ENCODE measurements at regions of chr5 and their contacts with region 1.

Region 1: DNA sequence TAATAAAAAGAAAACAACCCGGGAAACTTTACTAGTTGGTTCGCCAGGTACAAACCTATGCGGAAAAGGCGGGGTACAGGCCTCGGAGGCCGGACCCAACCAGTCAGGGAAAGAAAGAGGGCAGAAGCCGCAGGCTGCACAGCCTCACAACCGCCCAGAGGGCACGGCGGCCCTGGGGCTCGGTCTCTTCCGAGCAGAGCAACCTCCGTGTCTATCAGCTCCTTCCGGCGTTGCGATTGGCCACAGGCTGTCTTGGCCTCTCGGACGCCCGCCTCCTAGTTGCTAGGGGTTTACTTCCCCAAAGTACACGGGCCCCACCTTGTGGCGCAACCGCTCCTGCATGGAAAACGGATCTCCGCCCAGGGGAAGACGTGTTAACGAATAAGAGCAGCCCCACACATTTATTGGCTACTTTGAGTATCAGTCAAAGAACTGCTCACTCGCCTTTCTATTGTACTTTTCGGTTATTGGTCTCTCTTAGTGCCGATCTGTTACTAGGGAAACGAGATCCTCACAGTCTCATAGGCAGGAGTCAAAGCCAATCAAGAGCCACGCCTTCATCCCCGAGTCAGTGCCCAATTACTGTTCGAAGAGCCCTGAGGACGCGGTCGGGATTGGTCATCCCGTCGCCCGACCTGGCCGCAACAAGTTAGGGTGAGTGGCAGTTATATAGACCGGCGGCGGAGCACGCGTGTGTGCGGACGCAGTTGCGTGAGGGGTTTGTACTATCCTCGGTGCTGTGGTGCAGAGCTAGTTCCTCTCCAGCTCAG is at the start of gene G3BP1:
- DNase-seq: peak; percentile 100
- H3K4me3 Mint-ChIP-seq: peak within 1 kb of the TSS; percentile 85
- H3K27ac Mint-ChIP-seq: peak within 1 kb of the TSS; percentile 75
- H3K4me1 Mint-ChIP-seq: peaks cover 33% of the 10 kb centered on the region
- H3K27me3 Mint-ChIP-seq: no peaks in the 10 kb centered on the region
- total RNA-seq, gene G3BP1: 237 TPM

Region 2: GRCh38 chr5:151080623-151081430 is 690.6 kb before region 1 on chr5 and contains the start of gene TNIP1:
- CTCF ChIA-PET with region 1: no interaction called
- POLR2A ChIA-PET with region 1: no interaction called
- intact Hi-C with region 1: loop called (anchors 10 kb)
- DNase-seq: peak; percentile 96
- H3K4me3 Mint-ChIP-seq: peak within 1 kb of the TSS; percentile 89
- H3K27ac Mint-ChIP-seq: peak within 1 kb of the TSS; percentile 94
- H3K4me1 Mint-ChIP-seq: peaks cover 69% of the 10 kb centered on the region
- H3K27me3 Mint-ChIP-seq: no peaks in the 10 kb centered on the region
- total RNA-seq, gene TNIP1: 388 to 401 TPM

Region 3: DNA sequence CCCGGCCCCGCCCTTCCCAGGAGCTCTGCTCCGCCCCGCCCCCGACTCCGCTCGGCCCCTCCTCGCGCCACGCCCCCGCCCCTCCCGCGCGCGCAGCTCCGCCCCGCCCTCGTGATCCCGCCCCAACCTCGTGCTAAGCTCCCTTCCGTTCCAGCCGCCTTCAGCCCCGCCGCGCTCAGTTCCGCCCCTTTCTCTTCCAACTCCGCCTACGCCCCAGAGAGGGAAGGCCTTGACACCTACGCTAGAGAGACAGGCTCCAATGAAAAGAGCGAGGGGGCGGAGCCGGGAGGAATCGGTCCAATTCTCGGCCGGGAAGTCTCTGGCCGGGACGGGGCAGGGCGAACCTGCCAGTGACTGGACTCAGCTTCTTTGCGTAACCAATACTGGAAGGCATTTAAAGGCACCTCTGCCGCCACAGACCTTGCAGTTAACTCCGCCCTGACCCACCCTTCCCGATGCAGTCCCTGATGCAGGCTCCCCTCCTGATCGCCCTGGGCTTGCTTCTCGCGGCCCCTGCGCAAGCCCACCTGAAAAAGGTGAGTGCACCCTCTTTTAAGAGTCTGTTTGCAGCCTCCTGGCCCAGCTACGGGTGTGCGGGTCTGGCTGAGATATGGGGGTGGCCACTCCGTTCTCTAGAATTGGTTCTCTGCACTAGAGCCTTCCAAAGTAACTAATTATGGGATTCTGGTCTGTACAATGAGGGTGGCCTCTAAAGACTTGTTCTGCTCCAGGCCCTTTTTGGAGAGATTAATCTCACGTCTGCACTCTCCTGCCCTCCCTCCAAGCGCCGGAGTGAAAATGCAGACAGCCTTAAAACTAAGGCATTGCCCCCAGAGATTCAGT is 518.5 kb before region 1 on chr5 and contains the start of gene GM2A:
- CTCF ChIA-PET with region 1: no interaction called
- POLR2A ChIA-PET with region 1: interaction called, 6 read pairs
- intact Hi-C with region 1: loop called (anchors 1 kb)
- DNase-seq: peak; percentile 99
- H3K4me3 Mint-ChIP-seq: peak within 1 kb of the TSS; percentile 84
- H3K27ac Mint-ChIP-seq: peak within 1 kb of the TSS; percentile 94
- H3K4me1 Mint-ChIP-seq: peaks cover 45% of the 10 kb centered on the region
- H3K27me3 Mint-ChIP-seq: no peaks in the 10 kb centered on the region
- total RNA-seq, gene GM2A: 28.7 to 29.1 TPM

Region 4: DNA sequence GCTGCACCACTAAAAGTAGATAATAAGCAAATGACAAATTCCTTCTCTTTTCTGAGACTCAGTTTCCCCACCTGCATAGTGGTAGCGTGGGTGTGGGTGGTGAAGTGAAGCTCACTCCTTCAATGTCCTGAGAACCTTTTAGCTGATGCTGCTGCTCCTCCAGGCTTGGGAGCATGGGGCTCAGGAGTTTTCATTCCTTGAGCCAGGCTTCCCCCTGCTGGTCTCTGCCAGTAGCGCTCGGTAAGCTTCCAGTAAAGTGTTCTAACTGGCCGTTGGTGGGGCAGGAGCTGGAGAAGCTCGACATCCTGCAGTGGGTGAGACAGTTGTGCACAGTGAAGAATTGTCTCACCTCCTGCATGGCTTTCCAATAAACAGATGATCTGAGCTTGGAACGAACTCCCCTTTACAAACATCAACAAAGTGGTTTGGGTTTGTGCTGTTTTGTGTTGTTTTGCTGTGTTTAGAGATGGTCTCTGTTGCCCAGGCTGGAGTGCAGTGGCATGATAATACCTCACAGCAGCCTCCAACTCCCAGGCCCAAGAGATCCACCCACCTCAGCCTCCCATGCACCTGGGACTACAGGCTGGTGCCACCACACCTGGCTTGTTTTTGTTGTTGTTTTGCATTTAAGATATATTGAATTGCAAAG is 119.3 kb before region 1 on chr5:
- CTCF ChIA-PET with region 1: interaction called, 39 read pairs
- POLR2A ChIA-PET with region 1: no interaction called
- intact Hi-C with region 1: no loop called
- DNase-seq: peak; percentile 86
- H3K4me3 Mint-ChIP-seq: no peak overlapping the region
- H3K27ac Mint-ChIP-seq: no peak overlapping the region
- H3K4me1 Mint-ChIP-seq: peaks cover 5% of the 10 kb centered on the region
- H3K27me3 Mint-ChIP-seq: no peaks in the 10 kb centered on the region

Region 5: DNA sequence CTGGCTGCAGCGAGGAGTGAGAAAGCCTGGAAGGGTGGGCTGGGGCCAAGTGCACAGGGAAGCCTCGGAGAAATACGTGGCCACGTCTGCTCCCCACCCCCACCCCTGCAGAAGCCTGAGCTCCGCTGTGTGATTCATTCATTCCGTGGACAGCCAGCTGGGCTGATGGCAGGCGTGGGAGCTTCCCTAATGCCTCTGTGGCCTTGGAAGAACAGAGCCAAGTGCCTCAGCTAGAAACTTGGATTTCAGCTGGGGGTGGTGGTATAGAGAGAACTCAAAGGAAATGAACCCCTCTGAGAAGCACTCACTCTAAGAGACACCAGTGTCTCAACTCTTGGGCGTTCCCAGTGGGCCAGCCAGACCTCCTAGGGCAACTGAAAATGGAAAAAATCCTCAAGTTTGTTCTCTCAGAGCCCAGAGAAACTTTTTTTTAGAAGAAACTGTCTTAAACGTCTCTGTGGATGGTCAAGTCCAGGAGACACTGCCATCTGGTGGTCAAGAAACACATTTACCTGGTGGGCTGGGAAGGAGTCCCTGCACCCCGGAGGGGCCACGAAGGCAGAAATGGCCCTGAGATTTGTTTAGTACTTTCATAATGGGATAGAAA is 31.0 kb before region 1 on chr5:
- CTCF ChIA-PET with region 1: interaction called, 23 read pairs
- POLR2A ChIA-PET with region 1: no interaction called
- intact Hi-C with region 1: loop called (anchors 1 kb)
- DNase-seq: peak; percentile 55
- H3K4me3 Mint-ChIP-seq: no peak overlapping the region
- H3K27ac Mint-ChIP-seq: no peak overlapping the region
- H3K4me1 Mint-ChIP-seq: peaks cover 23% of the 10 kb centered on the region
- H3K27me3 Mint-ChIP-seq: no peaks in the 10 kb centered on the region

Region 6: DNA sequence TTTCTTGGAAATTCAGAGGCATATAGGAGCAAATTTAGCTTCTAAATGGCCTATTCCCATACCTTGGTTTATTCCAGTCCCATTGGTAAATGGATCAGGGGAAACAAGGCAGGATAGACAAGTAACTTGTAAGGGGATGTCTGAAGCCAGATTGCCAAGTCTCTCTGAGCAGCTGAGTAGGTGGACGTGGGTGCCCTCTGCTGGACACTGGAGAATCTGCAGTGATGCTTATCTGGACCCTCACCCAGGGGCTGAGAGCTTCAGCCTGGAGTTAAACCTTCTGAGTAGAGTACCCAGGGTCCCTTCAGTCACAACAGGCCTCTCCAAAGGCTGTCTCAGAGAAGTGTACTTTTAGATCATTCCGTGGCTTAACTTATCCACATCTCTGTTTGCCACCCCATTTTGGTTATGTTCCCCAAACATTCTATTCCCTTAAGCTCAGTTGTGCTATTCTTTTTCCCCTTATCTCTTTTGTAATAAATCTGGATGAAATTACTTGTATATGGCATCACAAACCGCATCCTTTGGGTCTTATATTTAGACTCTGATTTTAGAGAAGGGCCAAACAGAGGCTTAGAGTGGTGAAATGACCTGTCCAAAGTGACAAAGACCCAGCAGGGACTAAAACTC is 371.5 kb after region 1 on chr5:
- CTCF ChIA-PET with region 1: interaction called, 7 read pairs
- POLR2A ChIA-PET with region 1: no interaction called
- intact Hi-C with region 1: loop called (anchors 5 kb)
- DNase-seq: peak; percentile 73
- H3K4me3 Mint-ChIP-seq: no peak overlapping the region
- H3K27ac Mint-ChIP-seq: no peak overlapping the region
- H3K4me1 Mint-ChIP-seq: no peaks in the 10 kb centered on the region
- H3K27me3 Mint-ChIP-seq: no peaks in the 10 kb centered on the region